ENCODE measurements at regions of chr7 and their contacts with region 1.

Region 1: GRCh38 chr7:70788276-70788675 is 343.7 kb upstream of the GALNT17 start:
- DNase-seq: no peak
- H3K4me3 ChIP-seq: no peak overlapping the region
- H3K27ac ChIP-seq: no peak overlapping the region
- H3K4me1 ChIP-seq: no peaks in the 10 kb centered on the region; a peak in 1 of 7 replicates
- H3K27me3 ChIP-seq: no peaks in the 10 kb centered on the region
- CTCF ChIP-seq: peak in 1 of 3 experiments; percentile 23; a peak in 1 of 4 replicates
- EP300 ChIP-seq: no peak
- POLR2A ChIP-seq: no peak
- RAD21 ChIP-seq: no peak

Region 2: DNA sequence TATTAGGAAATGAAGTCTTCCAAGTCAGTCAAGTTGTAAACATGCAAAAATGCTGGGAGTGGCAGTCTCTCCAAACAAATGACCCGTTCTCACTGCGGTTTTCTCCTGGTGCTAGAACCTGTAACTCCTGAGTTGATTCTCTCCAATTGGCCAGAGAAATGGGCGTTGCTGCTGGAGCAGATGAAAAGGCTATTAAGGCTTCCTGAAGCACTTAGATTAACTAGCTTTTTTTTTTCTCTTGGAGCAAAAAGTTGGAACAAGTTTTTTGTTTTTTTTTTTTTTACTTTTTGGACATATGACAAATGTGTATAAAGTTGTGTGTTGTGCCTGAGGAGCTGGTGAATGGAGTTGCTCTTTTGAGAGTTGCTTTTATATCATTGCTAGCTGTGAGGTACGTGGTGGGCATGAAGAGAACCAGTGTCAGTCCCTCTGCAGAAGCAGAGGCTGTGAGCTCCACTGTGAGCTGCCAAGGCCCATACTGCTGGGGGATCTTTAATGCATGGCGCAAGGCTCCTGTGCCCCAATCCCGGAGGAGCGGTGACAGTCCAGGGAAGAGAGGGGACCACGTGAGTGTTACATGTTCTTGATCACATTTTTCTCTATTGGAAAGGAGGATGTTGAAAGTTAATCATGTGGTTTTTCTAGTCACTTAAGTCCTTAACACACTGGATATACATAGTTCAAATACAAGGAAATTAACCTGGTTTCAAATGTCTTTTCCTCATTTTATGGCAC is 50.0 kb before region 1 on chr7:
- CTCF ChIA-PET with region 1: no interaction called
- POLR2A ChIA-PET with region 1: no interaction called
- DNase-seq: no peak
- H3K4me3 ChIP-seq: no peak overlapping the region
- H3K27ac ChIP-seq: no peak overlapping the region
- H3K4me1 ChIP-seq: peaks cover 4 to 37% (median 12%) of the 10 kb centered on the region in 4 experiments
- H3K27me3 ChIP-seq: no peaks in the 10 kb centered on the region
- CTCF ChIP-seq: no peak; a peak in 1 of 4 replicates
- EP300 ChIP-seq: no peak
- POLR2A ChIP-seq: no peak
- RAD21 ChIP-seq: peak; percentile 14 to 43; a peak in 2 of 4 replicates

Region 3: DNA sequence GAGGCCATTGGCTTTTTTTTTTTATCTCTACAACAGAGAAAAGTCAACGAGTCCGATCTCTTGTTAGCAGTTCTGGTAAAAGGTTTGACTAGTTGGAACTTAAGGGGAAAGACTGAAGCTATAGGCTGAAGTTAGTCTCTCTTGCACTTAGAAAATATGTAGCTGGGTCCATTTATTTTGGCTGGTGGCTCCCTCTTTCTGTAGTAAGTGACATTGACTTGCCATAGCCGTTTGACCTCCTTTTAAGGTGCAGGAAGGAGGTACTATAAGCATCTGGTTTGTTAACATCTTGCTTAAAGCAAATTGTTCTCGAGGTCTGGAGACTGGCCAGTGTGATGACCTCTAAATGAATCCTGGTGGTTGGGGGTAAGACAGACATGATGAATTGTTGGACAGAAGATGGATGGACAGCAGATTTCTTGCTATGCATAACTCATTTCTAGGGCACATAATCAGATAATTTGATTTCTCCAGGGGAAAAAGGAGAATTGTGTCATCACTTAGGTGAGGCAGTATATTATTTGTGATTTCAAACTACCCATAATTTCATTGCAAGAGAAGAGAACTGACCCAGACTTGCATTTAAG is 12.6 kb before region 1 on chr7:
- CTCF ChIA-PET with region 1: interaction called, 46 read pairs
- POLR2A ChIA-PET with region 1: interaction called, 3 read pairs
- DNase-seq: no peak
- H3K4me3 ChIP-seq: no peak overlapping the region
- H3K27ac ChIP-seq: no peak overlapping the region
- H3K4me1 ChIP-seq: peaks cover 0 to 11% (median 8%) of the 10 kb centered on the region in 4 experiments; a peak in 6 of 7 replicates
- H3K27me3 ChIP-seq: no peaks in the 10 kb centered on the region
- CTCF ChIP-seq: peak in 2 of 3 experiments; percentile 42 to 67; a peak in 3 of 4 replicates
- EP300 ChIP-seq: no peak
- POLR2A ChIP-seq: no peak
- RAD21 ChIP-seq: peak; percentile 56 to 67

Measured in H1 (cell line).